ENCODE measurements at regions of chr3 and their contacts with region 1.

Region 1: DNA sequence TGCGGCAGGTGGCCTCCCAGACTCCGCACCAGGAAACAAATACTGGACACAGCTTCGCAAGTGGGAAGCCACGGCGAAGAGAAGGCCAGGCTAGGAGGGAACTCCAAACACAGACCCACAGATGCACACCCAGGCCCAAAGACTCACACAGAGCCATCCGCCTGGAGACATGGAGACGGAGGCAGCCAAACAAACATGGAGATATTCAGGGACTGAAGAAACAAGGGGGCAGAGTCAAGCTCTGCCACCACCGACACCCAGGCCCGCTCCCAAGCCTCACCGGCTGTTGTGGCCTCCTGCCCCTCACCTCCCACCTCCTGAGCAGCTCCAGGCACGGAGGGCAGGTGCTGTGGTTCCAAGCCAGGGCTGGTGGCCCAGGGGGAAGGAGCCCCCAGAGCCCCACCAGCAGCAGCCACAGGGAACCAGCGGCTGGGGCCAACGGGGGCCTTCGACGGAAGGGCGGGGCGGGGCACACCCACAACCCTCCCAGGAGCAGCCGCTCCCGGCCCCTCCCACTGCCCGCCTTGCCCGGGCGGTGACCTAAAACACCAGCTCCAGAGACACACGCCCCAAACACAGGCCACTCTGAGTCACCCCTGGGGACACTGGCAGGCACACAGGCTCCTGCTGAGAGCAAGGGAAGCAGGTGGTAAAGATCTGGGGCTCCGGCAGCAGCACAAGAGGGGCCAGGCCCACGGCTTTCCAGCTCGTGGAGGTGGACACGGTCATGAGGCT is 31.9 kb downstream of the TNK2 start:
- DNase-seq: no peak
- H3K4me3 ChIP-seq: no peak overlapping the region
- CTCF ChIP-seq: no peak

Region 2: GRCh38 chr3:195844671-195845218 is 31.7 kb before region 1 on chr3:
- CTCF ChIA-PET with region 1: no interaction called
- POLR2A ChIA-PET with region 1: no interaction called
- DNase-seq: no peak
- H3K4me3 ChIP-seq: no peak overlapping the region
- CTCF ChIP-seq: no peak

Region 3: DNA sequence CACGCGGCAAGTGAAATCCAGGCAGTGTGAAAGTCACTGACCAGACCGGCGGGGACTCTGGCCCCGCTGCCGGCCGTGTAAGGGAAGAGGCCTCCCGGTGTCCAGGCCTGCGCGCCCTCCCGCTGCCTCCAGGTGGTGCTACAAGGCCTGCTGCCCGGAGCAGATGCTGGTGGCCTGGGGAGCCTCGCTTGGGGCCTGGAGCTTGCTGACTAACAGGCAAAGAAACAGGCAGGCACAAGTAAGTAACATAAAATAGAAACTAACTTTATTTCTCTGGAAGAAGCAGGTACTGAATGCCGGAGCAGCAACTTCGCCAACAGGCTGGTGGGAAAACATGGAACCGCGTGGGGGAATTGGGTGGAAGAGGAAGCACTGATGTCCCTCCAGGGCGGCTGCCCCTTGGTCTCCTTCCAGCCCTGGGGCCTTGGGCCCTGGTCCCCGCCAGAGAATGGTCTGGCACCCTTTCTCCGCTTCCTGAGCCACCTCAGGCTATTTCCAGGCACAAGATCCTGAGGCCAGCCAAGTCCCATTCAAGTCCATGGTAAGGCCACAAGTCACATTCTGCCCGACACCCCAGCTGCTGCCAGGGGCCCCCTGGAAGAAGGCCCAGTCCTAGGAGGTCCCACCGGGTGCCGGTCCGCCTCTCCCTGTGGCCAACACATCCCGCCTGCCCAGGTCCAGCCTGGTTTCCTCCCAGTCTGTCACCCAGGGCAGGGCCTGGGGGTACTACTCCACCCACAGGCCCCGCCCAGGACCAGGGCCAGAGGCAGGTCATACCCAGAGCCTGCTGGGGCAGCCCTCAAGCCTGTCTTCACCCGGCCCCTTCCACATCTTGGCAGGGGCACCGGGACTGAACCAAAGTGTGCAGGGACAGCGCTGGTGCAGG is 13.1 kb before region 1 on chr3:
- CTCF ChIA-PET with region 1: interaction called, 17 read pairs
- POLR2A ChIA-PET with region 1: no interaction called
- DNase-seq: peak; percentile 40
- H3K4me3 ChIP-seq: no peak overlapping the region
- CTCF ChIP-seq: peak; percentile 99

Region 4: GRCh38 chr3:195894780-195895607 is 18.5 kb after region 1 on chr3:
- CTCF ChIA-PET with region 1: interaction called, 31 read pairs
- POLR2A ChIA-PET with region 1: interaction called, 3 read pairs
- DNase-seq: no peak
- H3K4me3 ChIP-seq: peak overlapping the region; percentile 78
- CTCF ChIP-seq: peak; percentile 97